ENCODE measurements at regions of chr1 and their contacts with region 1.

Region 1: GRCh38 chr1:22416555-22417454 is 34.8 kb upstream of the ZBTB40 start:
- DNase-seq: peak; percentile 86
- H3K4me3 Mint-ChIP-seq: no peak overlapping the region
- H3K27ac Mint-ChIP-seq: no peak overlapping the region
- H3K4me1 Mint-ChIP-seq: peaks cover 2% of the 10 kb centered on the region
- H3K27me3 Mint-ChIP-seq: peaks cover 81% of the 10 kb centered on the region

Region 2: DNA sequence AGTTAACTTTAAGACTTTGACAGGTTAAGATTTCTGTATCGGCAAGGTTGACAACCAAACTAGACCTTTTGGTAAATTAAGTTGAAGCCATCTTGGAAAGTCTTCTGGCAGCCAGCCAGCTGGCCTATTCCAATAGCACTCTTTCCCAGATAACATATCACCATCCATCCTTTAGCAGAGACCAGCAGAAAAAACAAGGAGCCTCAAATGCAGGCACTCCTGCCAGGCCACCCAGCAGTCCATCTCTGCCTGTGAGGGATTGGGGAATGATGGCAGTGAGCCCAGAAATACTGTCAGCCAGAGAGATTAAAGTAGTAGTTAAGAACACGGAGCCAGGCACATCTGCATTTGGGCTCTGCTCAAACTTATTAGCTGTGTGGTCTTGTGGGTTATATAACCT is 54.3 kb after region 1 on chr1:
- CTCF ChIA-PET with region 1: no interaction called
- DNase-seq: no peak
- H3K4me3 Mint-ChIP-seq: no peak overlapping the region
- H3K27ac Mint-ChIP-seq: no peak overlapping the region
- H3K4me1 Mint-ChIP-seq: no peaks in the 10 kb centered on the region
- H3K27me3 Mint-ChIP-seq: no peaks in the 10 kb centered on the region

Region 3: DNA sequence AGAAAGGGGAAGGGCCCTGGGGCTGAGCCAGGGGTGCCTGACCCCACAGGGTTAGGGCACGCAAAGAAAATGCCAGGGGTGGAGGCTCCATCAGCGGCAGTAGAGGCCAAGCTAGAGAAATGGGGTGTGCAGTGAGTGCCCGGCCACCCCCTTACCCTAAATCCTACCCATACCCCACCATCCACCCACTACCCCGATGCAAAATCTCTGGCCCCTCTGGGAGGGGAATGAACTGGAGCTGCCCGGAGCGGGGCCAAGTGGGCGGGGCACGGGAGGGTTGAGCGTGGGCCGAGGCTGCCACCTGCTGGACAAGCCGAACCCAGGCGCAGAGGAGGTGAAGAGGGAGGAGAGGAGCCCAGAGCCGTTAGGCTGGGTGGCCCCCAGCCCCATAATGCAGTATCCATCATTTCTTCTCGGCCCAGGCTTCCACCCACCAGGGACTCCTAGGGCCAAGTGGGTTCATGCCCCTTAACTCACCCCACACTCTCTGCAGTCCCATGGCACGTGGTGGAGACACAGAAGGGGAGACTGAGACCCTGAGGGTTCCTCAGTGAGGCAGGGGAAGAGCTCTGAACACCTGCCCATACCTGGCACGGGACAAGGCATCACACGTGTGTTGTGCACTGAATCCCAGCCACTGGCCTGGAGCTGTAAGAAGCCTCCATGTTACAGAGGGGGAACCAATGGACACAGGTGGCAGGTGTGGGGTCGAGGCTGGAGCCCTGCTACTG is 225.3 kb after region 1 on chr1:
- CTCF ChIA-PET with region 1: interaction called, 30 read pairs
- DNase-seq: peak; percentile 78
- H3K4me3 Mint-ChIP-seq: no peak overlapping the region
- H3K27ac Mint-ChIP-seq: no peak overlapping the region
- H3K4me1 Mint-ChIP-seq: no peaks in the 10 kb centered on the region
- H3K27me3 Mint-ChIP-seq: peaks cover 5% of the 10 kb centered on the region

Measured in activated naive CD4-positive, alpha-beta T cell treated with anti-CD3 and anti-CD28 coated beads, Interleukin-2, amount 10 ng/mL, durations not matched to agents 7 days and 5 days (primary cell).